Heart right ventricle (tissue), 16 donors: ENCODE measurements at regions of chr10 and their contacts with region 1.

Region 1: GRCh38 chr10:80924063-80924952 is 386.6 kb downstream of the SH2D4B start:
- DNase-seq: peak in 1 of 2 donors; percentile 51
- ATAC-seq: peak in 3 of 8 donors; percentile 42 to 65 (median 43)
- H3K4me3 ChIP-seq: no peak overlapping the region
- H3K27ac ChIP-seq: no peak overlapping the region
- H3K4me1 ChIP-seq: no peaks in the 10 kb centered on the region
- H3K27me3 ChIP-seq: peaks cover 0 to 19% (median 0%) of the 10 kb centered on the region in 7 donors
- CTCF ChIP-seq: peak; percentile 48 to 84 (median 74)

Region 2: DNA sequence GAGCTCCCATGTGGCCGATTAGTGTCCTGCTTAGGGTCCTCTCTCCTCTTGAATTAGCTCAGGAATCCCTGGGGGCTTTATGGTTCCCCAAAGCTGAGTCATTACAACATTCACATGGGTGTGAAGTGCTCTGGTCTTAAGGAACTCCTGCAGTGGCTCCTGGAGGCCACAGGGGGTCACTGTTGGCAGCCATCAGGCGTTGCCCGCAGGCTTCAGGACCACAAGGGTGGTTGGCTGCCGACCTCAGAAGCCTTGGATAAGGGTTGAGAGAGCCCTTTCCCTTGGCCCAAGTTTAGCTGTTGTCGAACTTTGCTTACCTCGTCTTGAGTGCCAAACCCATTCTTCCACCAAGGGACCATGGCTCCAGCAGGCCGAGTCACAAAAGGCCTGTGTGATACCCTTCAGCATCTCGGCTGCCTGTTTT is 324.9 kb before region 1 on chr10:
- intact Hi-C with region 1: loop called in 1 of 10 experiments (anchors 1 kb)
- DNase-seq: peak; percentile 12 to 47
- ATAC-seq: peak in 7 of 8 donors; percentile 47 to 84 (median 72)
- H3K4me3 ChIP-seq: no peak overlapping the region
- H3K27ac ChIP-seq: peak overlapping the region in 1 of 10 donors; percentile 1
- H3K4me1 ChIP-seq: peaks cover 0 to 25% (median 0%) of the 10 kb centered on the region in 9 donors
- H3K27me3 ChIP-seq: no peaks in the 10 kb centered on the region
- CTCF ChIP-seq: peak; percentile 43 to 88 (median 64)

Region 3: DNA sequence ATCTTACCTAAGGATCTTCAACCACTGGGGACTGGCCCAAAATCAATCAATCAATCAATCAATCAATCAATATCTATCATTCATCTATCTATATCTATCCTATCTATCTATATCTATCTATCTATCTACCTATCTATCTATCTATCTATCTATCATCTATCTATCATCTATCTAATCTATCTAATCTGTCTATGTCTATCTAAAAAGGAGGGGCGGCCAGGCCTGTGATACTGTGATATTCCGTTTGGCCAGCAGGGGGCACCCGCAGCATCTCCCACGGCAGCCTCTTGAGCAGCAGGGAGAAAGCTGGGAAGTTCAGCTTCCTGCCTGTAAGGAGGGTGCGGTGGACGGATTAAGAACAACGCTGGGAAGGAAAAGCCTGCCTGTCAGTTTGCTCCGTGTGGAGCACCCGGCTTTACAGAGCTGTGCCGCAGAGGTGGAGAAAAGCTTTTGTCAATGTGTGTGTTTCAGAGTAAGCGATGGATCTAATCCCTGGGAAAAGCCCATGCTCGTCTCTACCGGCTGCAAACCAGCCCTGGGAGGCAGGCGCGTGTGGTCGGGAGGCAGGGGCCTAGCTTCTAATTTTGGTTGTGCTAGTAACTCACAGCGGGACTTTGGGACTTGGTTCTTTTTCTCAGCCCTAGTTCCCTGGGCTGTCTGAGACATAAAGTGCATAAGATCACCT is 261.6 kb before region 1 on chr10:
- intact Hi-C with region 1: loop called in 7 of 10 experiments (anchors 1 to 10 kb)
- DNase-seq: peak; percentile 79 to 85
- ATAC-seq: peak; percentile 78 to 94 (median 90)
- H3K4me3 ChIP-seq: peak overlapping the region in 7 of 10 donors; percentile 14 to 49 (median 42)
- H3K27ac ChIP-seq: peak overlapping the region in 9 of 10 donors; percentile 24 to 85 (median 71)
- H3K4me1 ChIP-seq: peaks cover 0 to 46% (median 6%) of the 10 kb centered on the region in 9 donors
- H3K27me3 ChIP-seq: peaks cover 0 to 5% (median 0%) of the 10 kb centered on the region in 7 donors
- CTCF ChIP-seq: peak; percentile 79 to 93 (median 87)

Region 4: GRCh38 chr10:80699602-80700039 is 224.7 kb before region 1 on chr10:
- intact Hi-C with region 1: loop called in 8 of 10 experiments (anchors 2 to 10 kb)
- DNase-seq: peak; percentile 81 to 85
- ATAC-seq: peak; percentile 81 to 91 (median 88)
- H3K4me3 ChIP-seq: no peak overlapping the region
- H3K27ac ChIP-seq: no peak overlapping the region
- H3K4me1 ChIP-seq: peaks cover 0 to 14% (median 8%) of the 10 kb centered on the region in 9 donors
- H3K27me3 ChIP-seq: peaks cover 0 to 3% (median 0%) of the 10 kb centered on the region in 7 donors
- CTCF ChIP-seq: peak; percentile 63 to 89 (median 87)